H1 (cell line): ENCODE measurements at regions of chr17 and their contacts with region 1.

Region 1: DNA sequence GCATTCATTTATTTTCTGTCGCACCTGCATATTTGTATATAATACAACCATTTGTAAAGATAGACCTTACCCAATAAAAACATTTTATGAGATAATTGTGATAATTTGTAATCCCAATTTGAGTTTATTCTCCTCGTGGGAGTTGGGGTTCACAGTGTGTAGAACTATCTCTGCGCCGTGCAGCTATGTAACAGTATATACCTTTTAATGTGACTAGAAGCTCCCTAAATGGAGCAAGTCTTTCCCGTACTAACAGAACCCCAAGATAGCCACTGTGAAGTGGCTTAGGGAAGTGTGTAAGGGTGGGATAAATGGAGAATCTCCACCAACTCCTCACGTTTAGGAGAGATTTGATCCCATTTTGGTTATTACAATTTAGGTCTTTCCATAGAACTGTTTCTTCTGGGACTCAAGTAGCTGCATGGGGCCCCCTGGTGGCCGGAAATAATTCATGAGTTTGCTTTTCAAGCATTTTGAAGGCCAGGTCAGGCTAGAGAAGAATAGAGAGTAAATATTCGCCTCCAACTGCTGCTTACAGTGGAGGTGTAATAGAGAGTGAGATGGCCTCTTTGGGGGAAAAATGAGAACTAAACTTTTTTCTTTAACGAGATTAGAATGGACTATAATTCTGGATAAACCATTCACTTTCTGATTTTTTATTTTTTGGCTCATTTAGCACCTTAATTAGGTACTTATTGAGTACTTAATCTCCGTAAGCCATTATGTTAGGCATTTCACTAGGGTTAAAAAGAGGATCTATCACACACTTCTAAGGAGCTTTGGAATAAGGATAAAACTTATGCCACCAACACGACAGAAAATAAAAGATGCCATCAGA is 4.5 kb downstream of the TMEM100 start:
- DNase-seq: peak; percentile 67 to 88
- H3K4me3 ChIP-seq: no peak overlapping the region
- H3K27ac ChIP-seq: no peak overlapping the region
- H3K4me1 ChIP-seq: peaks cover 0 to 4% (median 3%) of the 10 kb centered on the region in 4 experiments; a peak in 4 of 7 replicates
- H3K27me3 ChIP-seq: no peaks in the 10 kb centered on the region
- CTCF ChIP-seq: peak in 2 of 3 experiments; percentile 64 to 68; a peak in 3 of 4 replicates
- EP300 ChIP-seq: no peak
- POLR2A ChIP-seq: no peak
- RAD21 ChIP-seq: peak; percentile 68 to 78

Region 2: DNA sequence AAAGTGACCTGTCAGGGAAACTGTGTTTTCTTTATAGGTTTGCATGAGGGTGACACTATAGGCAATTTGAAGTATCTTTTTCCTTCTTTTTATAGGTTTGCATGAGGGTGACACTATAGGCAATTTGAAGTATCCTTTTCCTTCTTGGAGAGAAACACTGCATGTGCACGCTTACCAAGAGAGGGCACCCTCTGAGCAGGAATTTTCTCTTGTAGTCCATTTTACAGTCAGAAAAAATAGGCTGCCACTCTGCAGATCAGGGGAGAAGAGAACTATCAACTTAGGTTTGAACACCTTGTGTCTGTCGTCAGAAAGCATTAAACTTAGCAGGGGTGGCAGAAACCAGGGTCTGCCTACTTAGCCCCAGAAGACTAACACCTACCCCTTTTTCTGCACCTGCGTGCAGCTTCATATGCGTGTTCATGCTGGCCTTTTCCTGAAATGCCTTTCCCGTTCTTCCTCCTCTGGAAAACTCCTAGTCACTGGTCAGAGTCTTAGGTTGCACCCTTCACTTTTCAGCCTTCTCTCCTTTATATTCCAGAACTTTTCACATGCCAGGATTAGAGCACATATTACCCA is 190.5 kb before region 1 on chr17:
- CTCF ChIA-PET with region 1: interaction called, 96 read pairs
- POLR2A ChIA-PET with region 1: interaction called, 3 read pairs
- DNase-seq: peak in 1 of 2 experiments; percentile 50
- H3K4me3 ChIP-seq: no peak overlapping the region
- H3K27ac ChIP-seq: no peak overlapping the region
- H3K4me1 ChIP-seq: peaks cover 0 to 2% (median 0%) of the 10 kb centered on the region in 4 experiments; a peak in 1 of 7 replicates
- H3K27me3 ChIP-seq: no peaks in the 10 kb centered on the region
- CTCF ChIP-seq: peak in 2 of 3 experiments; percentile 67 to 68; a peak in 3 of 4 replicates
- EP300 ChIP-seq: no peak
- POLR2A ChIP-seq: no peak
- RAD21 ChIP-seq: peak; percentile 88 to 89

Region 3: GRCh38 chr17:55580596-55581133 is 137.5 kb before region 1 on chr17:
- CTCF ChIA-PET with region 1: no interaction called
- POLR2A ChIA-PET with region 1: no interaction called
- DNase-seq: no peak
- H3K4me3 ChIP-seq: no peak overlapping the region
- H3K27ac ChIP-seq: no peak overlapping the region
- H3K4me1 ChIP-seq: peaks cover 0 to 7% (median 3%) of the 10 kb centered on the region in 4 experiments; a peak in 2 of 7 replicates
- H3K27me3 ChIP-seq: no peaks in the 10 kb centered on the region
- CTCF ChIP-seq: no peak
- EP300 ChIP-seq: no peak
- POLR2A ChIP-seq: no peak
- RAD21 ChIP-seq: no peak

Region 4: GRCh38 chr17:55641676-55642081 is 76.4 kb before region 1 on chr17:
- CTCF ChIA-PET with region 1: interaction called, 10 read pairs
- POLR2A ChIA-PET with region 1: no interaction called
- DNase-seq: peak; percentile 33 to 52
- H3K4me3 ChIP-seq: no peak overlapping the region
- H3K27ac ChIP-seq: no peak overlapping the region
- H3K4me1 ChIP-seq: peaks cover 0 to 5% (median 0%) of the 10 kb centered on the region in 4 experiments; a peak in 1 of 7 replicates
- H3K27me3 ChIP-seq: no peaks in the 10 kb centered on the region
- CTCF ChIP-seq: peak; percentile 3 to 38 (median 22); a peak in 3 of 4 replicates
- EP300 ChIP-seq: no peak
- POLR2A ChIP-seq: no peak
- RAD21 ChIP-seq: peak; percentile 30 to 51; a peak in 3 of 4 replicates

Region 5: GRCh38 chr17:55706808-55707807 is 11.0 kb before region 1 on chr17:
- CTCF ChIA-PET with region 1: interaction called, 24 read pairs
- POLR2A ChIA-PET with region 1: no interaction called
- DNase-seq: peak in 1 of 2 experiments; percentile 48
- H3K4me3 ChIP-seq: peak overlapping the region in 1 of 4 experiments; percentile 5; a peak in 1 of 8 replicates
- H3K27ac ChIP-seq: no peak overlapping the region
- H3K4me1 ChIP-seq: peaks cover 3 to 9% (median 4%) of the 10 kb centered on the region in 4 experiments; a peak in 5 of 7 replicates
- H3K27me3 ChIP-seq: no peaks in the 10 kb centered on the region
- CTCF ChIP-seq: no peak
- EP300 ChIP-seq: no peak
- POLR2A ChIP-seq: no peak
- RAD21 ChIP-seq: no peak

Region 6: GRCh38 chr17:55750750-55751657 is 32.9 kb after region 1 on chr17 and contains the start of gene PCTP:
- CTCF ChIA-PET with region 1: interaction called, 10 read pairs
- POLR2A ChIA-PET with region 1: interaction called, 3 read pairs
- DNase-seq: peak; percentile 78 to 96
- H3K4me3 ChIP-seq: peak within 1 kb of the TSS; percentile 75 to 85 (median 78)
- H3K27ac ChIP-seq: no peak within 1 kb of the TSS
- H3K4me1 ChIP-seq: peaks cover 2 to 7% (median 3%) of the 10 kb centered on the region in 4 experiments; a peak in 2 of 7 replicates
- H3K27me3 ChIP-seq: no peaks in the 10 kb centered on the region
- CTCF ChIP-seq: peak; percentile 36 to 44 (median 42)
- EP300 ChIP-seq: peak in 1 of 2 experiments; percentile 63; a peak in 1 of 3 replicates
- POLR2A ChIP-seq: peak; percentile 76 to 79
- RAD21 ChIP-seq: peak; percentile 28 to 34; a peak in 2 of 4 replicates
- total RNA-seq, gene PCTP: 12.5 and 14.6 TPM in 2 replicates

Region 7: DNA sequence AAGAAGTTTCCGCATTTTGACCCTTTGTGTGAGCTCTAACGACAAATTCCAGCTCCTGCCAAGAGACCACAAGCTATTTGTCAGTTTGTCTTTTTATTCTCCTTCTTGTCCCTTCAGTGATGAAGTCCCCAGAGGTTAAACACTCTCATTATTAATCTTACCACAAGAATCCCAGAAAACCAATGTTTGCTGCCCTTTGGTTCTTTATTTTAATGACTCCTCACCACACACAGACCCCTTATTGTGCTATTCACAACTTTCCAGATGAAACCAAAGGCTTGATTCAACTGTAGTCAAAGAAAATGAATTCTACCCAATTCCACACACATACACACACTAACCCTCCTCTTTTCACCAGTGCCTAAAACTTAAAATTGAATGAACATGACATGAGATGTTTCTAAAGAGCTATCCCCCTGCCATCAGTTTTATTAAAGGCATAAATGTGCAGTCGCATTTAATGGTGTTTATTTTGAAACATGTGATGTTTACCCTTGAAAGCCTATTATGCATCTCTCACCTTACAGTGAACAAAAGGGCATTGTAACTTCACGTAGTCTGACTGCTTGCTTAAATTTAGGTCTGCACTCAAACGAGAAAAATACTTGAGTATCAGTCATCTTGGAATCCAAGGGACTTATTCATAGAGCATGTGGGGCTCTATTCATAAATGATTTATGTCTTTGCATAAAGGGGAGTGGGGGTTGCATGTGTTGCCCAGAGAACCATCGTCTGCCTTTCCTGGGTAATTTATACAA is 76.8 kb after region 1 on chr17:
- CTCF ChIA-PET with region 1: no interaction called
- POLR2A ChIA-PET with region 1: no interaction called
- DNase-seq: no peak
- H3K4me3 ChIP-seq: no peak overlapping the region
- H3K27ac ChIP-seq: no peak overlapping the region
- H3K4me1 ChIP-seq: peaks cover 0 to 5% (median 2%) of the 10 kb centered on the region in 4 experiments; a peak in 3 of 7 replicates
- H3K27me3 ChIP-seq: no peaks in the 10 kb centered on the region
- CTCF ChIP-seq: no peak
- EP300 ChIP-seq: no peak
- POLR2A ChIP-seq: no peak
- RAD21 ChIP-seq: no peak

Region 8: GRCh38 chr17:55825213-55825612 is 107.1 kb after region 1 on chr17:
- CTCF ChIA-PET with region 1: interaction called, 25 read pairs
- POLR2A ChIA-PET with region 1: no interaction called
- DNase-seq: no peak
- H3K4me3 ChIP-seq: no peak overlapping the region
- H3K27ac ChIP-seq: no peak overlapping the region
- H3K4me1 ChIP-seq: no peaks in the 10 kb centered on the region
- H3K27me3 ChIP-seq: no peaks in the 10 kb centered on the region
- CTCF ChIP-seq: peak in 2 of 3 experiments; percentile 36 to 69; a peak in 2 of 4 replicates
- EP300 ChIP-seq: no peak
- POLR2A ChIP-seq: no peak
- RAD21 ChIP-seq: peak; percentile 74 to 78

Region 9: DNA sequence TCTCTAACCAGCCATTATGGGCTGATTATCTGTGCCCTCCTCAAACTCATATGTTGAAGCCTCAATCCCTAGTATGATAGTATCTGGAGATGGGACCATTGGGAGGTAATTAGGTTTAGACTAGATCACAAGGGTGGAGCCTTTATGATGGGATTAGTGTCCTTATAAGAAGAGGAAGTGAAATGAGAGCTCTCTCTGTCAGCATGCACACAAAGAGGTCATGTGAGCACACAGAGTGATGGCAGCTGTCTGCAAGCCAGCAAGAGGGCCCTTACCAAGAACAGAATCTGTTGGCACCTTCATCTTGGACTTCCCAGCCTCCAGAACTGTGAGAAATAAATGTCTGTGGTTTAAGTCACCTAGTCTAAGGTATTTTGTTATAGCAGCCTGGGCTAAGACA is 134.6 kb after region 1 on chr17:
- CTCF ChIA-PET with region 1: no interaction called
- POLR2A ChIA-PET with region 1: no interaction called
- DNase-seq: no peak
- H3K4me3 ChIP-seq: no peak overlapping the region
- H3K27ac ChIP-seq: no peak overlapping the region
- H3K4me1 ChIP-seq: no peaks in the 10 kb centered on the region
- H3K27me3 ChIP-seq: no peaks in the 10 kb centered on the region
- CTCF ChIP-seq: no peak
- EP300 ChIP-seq: no peak
- POLR2A ChIP-seq: no peak
- RAD21 ChIP-seq: no peak